KBM-7 (cell line): ENCODE measurements at regions of chr6 and their contacts with region 1.

Region 1: DNA sequence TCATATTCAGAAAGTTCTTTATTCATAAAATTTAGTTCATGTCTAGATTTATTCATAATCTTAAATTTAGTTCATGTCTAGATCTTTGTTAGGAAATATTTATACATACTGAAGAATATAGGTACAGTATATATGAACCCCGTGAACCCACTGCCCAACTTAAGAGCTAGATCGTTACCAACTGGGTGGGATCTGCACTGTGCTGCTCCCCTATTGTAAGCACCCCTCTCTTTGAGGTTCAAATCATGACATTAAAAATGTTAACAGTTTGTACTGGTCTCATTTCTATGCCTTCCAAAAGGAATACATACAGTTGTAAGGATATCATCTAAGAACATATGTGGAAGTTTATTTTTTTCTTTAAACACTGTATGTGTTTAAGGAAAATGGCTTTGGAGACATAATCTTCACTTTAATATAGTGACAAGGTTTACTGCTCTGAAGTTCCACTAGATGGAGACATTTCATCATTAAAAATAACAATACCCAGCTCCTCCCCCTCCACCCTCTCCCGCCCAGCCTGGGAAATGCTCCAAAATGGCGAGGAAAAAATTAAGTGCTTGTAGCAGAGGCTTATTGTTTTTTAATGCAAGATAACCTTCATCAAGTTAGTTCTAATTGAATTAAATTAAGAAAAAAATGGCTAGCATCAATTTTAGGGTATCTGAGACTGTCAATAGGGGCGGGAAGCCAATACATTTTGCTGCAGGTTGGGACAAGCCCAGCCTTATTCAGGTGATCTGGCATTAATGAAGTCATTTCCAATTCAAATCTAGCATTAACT is 104.1 kb upstream of the TRAF3IP2 start:
- DNase-seq: peak; percentile 70

Region 2: DNA sequence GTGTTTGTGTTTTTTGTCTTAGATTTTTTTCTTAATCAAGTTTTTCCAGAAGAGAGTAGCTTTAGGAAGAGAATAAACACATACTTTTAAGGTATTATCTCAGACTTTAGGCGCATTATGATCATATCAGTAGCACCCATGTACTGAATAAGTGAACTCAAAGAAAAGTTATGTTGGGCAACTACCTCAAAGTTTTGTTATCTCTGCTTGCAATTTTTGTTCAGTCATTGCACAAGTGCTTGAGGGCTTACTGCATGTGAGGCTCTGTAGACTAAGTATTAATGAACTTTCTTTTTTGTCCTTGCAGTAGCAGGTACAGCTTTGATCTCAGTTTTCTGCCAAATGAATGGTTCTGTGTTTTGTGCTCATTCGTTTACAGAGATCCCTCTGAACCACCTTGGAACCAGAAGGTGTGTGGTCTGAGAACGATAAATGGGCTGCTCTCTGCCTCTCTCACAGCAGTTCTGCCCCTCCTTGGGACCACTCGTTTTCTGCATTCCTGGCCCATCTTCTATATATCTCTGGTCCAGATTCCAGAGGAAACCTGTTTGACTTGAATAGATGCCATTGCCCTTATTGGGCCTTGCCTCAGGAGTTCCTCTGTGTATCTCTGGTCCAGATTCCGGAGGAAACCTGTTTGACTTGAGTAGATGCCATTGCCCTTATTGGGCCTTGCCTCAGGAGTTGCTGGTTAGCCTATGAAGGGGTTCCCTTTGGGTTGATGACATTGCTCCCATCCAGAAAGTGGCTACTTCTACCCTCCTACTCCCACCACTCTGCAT is 433.3 kb before region 1 on chr6:
- in situ Hi-C with region 1: no loop called
- DNase-seq: no peak

Region 3: DNA sequence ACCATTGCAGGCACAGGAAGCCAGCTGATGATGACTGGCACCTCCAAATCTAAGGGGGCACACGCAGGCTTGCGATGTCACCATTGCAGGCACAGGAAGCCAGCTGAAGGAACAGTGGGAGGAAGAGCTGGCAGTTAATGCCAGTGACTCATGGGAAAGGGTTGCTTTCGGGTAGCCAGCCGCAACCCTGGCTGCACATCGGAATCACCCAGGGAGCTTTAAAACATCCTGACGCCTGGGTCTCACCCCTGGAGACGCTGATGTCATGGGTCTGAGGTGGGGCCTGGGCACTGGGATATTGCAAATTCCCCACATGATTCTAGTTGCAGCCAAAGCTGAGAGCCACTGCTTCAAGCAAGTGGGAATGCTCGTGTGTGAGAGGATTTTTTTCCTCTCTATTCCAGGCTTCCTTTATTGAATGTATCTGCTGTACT is 328.0 kb after region 1 on chr6:
- in situ Hi-C with region 1: loop called (anchors 10 kb)
- DNase-seq: no peak

Region 4: GRCh38 chr6:112360498-112360897 is 650.7 kb after region 1 on chr6:
- in situ Hi-C with region 1: no loop called
- DNase-seq: peak; percentile 12